ENCODE measurements at regions of chr3 and their contacts with region 1.

Region 1: GRCh38 chr3:43286115-43286840 is at the start of gene SNRK:
- DNase-seq: peak; percentile 98
- H3K4me3 Mint-ChIP-seq: peak within 1 kb of the TSS; percentile 95
- H3K27ac Mint-ChIP-seq: peak within 1 kb of the TSS; percentile 91
- H3K4me1 Mint-ChIP-seq: peaks cover 36% of the 10 kb centered on the region
- H3K27me3 Mint-ChIP-seq: peaks cover 8% of the 10 kb centered on the region
- total RNA-seq, gene SNRK: 29.0 and 30.3 TPM in 2 replicates

Region 2: GRCh38 chr3:42590989-42591756 is 695.1 kb before region 1 on chr3:
- intact Hi-C with region 1: loop called (anchors 10 kb)
- DNase-seq: peak; percentile 66
- H3K4me3 Mint-ChIP-seq: peak overlapping the region; percentile 88
- H3K27ac Mint-ChIP-seq: peak overlapping the region; percentile 96
- H3K4me1 Mint-ChIP-seq: peaks cover 47% of the 10 kb centered on the region
- H3K27me3 Mint-ChIP-seq: no peaks in the 10 kb centered on the region

Region 3: GRCh38 chr3:42979044-42979972 is 307.0 kb before region 1 on chr3 and contains the start of gene GASK1A:
- intact Hi-C with region 1: no loop called
- DNase-seq: no peak
- H3K4me3 Mint-ChIP-seq: peak within 1 kb of the TSS; percentile 55
- H3K27ac Mint-ChIP-seq: no peak within 1 kb of the TSS
- H3K4me1 Mint-ChIP-seq: peaks cover 1% of the 10 kb centered on the region
- H3K27me3 Mint-ChIP-seq: peaks cover 42% of the 10 kb centered on the region
- total RNA-seq, gene GASK1A: not detected in 2 replicates

Region 4: DNA sequence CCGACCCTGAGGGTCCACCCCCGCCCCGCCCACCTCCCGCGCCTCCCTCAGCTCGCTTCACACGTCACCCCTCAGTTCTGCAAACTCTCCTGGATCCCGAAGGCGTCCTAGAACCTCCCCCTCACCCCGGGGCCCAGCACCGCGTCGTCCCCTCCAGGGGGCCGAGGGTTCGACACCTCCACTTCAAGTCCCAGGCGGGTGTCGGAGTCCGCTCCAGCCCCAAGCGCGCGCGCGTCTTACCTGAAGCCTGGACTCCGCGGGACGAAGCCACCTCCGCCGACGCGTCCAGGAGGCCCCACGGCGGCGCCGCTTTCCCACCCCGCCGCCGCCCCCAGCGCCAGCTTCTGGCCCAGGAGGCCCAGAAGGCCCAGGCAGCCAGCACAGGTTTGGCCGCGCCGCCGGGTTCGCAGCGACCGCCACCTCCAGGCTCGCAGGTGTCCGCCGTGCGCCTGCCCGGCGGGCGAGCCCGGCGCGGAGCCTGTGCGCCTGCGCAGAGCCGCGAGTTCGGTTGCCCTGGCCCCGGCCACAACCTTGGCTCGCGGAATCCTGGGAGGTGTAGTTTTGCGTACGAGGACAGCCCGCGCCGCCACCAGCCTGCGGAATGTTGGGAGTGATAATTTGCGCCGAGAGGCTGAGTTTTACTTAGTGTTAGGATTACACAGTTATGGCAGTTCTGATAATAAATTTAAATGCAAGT is 180.5 kb before region 1 on chr3 and contains the start of gene POMGNT2:
- intact Hi-C with region 1: loop called (anchors 5 kb)
- DNase-seq: peak; percentile 96
- H3K4me3 Mint-ChIP-seq: peak within 1 kb of the TSS; percentile 80
- H3K27ac Mint-ChIP-seq: no peak within 1 kb of the TSS
- H3K4me1 Mint-ChIP-seq: peaks cover 12% of the 10 kb centered on the region
- H3K27me3 Mint-ChIP-seq: no peaks in the 10 kb centered on the region
- total RNA-seq, gene POMGNT2: 8.3 and 8.8 TPM in 2 replicates

Region 5: DNA sequence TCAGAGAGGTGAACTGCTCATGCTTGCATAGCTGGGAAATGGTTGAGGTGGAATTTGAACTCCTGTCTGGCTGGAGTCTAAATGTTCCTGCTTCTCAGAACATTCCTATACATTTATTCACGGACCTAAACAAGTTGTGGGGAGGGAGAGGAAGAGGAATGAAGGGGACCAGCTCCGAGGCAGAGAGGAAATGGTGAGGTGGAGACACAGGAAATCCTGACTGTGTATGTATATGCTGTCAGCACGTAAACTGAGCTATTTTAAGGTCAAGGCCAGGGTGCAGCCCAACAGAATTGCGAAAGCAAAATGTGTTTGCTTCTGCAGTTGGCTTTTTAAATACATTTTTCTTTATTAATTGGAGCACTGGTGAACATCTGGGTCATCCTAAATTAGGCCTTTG is 106.3 kb before region 1 on chr3:
- intact Hi-C with region 1: loop called (anchors 2 kb)
- DNase-seq: peak; percentile 83
- H3K4me3 Mint-ChIP-seq: peak overlapping the region; percentile 74
- H3K27ac Mint-ChIP-seq: peak overlapping the region; percentile 92
- H3K4me1 Mint-ChIP-seq: peaks cover 39% of the 10 kb centered on the region
- H3K27me3 Mint-ChIP-seq: peaks cover 2% of the 10 kb centered on the region

Region 6: GRCh38 chr3:43326891-43327581 is 40.8 kb after region 1 on chr3:
- intact Hi-C with region 1: loop called (anchors 5 kb)
- DNase-seq: no peak
- H3K4me3 Mint-ChIP-seq: no peak overlapping the region
- H3K27ac Mint-ChIP-seq: no peak overlapping the region
- H3K4me1 Mint-ChIP-seq: peaks cover 31% of the 10 kb centered on the region
- H3K27me3 Mint-ChIP-seq: no peaks in the 10 kb centered on the region

Region 7: GRCh38 chr3:43389388-43390254 is 103.3 kb after region 1 on chr3:
- intact Hi-C with region 1: loop called (anchors 1 kb)
- DNase-seq: peak; percentile 93
- H3K4me3 Mint-ChIP-seq: peak overlapping the region; percentile 69
- H3K27ac Mint-ChIP-seq: peak overlapping the region; percentile 88
- H3K4me1 Mint-ChIP-seq: peaks cover 47% of the 10 kb centered on the region
- H3K27me3 Mint-ChIP-seq: peaks cover under 1% of the 10 kb centered on the region

Region 8: GRCh38 chr3:43621656-43622432 is 335.6 kb after region 1 on chr3 and contains the start of gene ANO10:
- intact Hi-C with region 1: loop called (anchors 5 kb)
- DNase-seq: peak; percentile 98
- H3K4me3 Mint-ChIP-seq: peak within 1 kb of the TSS; percentile 95
- H3K27ac Mint-ChIP-seq: peak within 1 kb of the TSS; percentile 89
- H3K4me1 Mint-ChIP-seq: peaks cover 21% of the 10 kb centered on the region
- H3K27me3 Mint-ChIP-seq: peaks cover 16% of the 10 kb centered on the region
- total RNA-seq, gene ANO10: 3.5 and 6.0 TPM in 2 replicates